Dendritic cell treated with granulocyte-macrophage colony-stimulating factor and Interleukin-4, amounts not matched to agents 40 ng/mL and 50 ng/mL, for 4 days (primary cell): ENCODE measurements at regions of chr4 and their contacts with region 1.

Region 1: GRCh38 chr4:40722576-40723161 is 27.1 kb upstream of the NSUN7 start:
- H3K4me3 Mint-ChIP-seq: no peak overlapping the region
- H3K27ac Mint-ChIP-seq: no peak overlapping the region
- H3K4me1 Mint-ChIP-seq: peaks cover 12% of the 10 kb centered on the region
- H3K27me3 Mint-ChIP-seq: no peaks in the 10 kb centered on the region

Region 2: DNA sequence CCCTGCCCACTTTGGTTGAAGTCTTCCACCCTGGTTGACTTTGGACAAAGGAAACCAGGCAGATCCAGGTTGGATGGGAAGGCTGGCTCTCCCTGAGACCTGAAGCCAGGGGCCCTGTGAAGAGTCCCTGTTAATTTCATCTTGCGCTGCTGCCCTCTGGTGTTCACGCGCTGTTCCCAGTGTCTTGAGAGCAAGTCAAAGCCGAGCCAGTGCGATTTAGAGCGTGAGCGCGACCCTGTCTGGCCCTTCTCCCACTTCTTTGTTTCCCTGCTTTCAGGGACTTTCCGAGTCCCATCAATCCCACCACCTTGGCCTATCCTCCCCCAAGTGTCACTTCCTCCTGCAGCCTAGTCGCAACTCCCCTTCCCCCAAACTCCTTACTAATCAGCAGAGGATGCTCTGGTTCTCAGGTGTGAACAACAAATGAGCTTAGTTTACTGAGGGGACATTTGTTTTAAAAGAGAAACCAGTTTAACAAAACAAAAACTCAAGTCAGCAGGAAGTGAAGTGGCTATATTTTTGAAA is 413.4 kb before region 1 on chr4:
- intact Hi-C with region 1: loop called (anchors 5 kb)
- H3K4me3 Mint-ChIP-seq: peak overlapping the region; percentile 42
- H3K27ac Mint-ChIP-seq: no peak overlapping the region
- H3K4me1 Mint-ChIP-seq: peaks cover 47% of the 10 kb centered on the region
- H3K27me3 Mint-ChIP-seq: peaks cover 16% of the 10 kb centered on the region

Region 3: GRCh38 chr4:40550948-40551462 is 171.7 kb before region 1 on chr4:
- intact Hi-C with region 1: loop called (anchors 5 kb)
- H3K4me3 Mint-ChIP-seq: peak overlapping the region; percentile 79
- H3K27ac Mint-ChIP-seq: peak overlapping the region; percentile 92
- H3K4me1 Mint-ChIP-seq: peaks cover 91% of the 10 kb centered on the region
- H3K27me3 Mint-ChIP-seq: no peaks in the 10 kb centered on the region

Region 4: GRCh38 chr4:40576631-40577480 is 145.8 kb before region 1 on chr4:
- intact Hi-C with region 1: loop called (anchors 2 kb)
- H3K4me3 Mint-ChIP-seq: peak overlapping the region; percentile 48
- H3K27ac Mint-ChIP-seq: peak overlapping the region; percentile 98
- H3K4me1 Mint-ChIP-seq: peaks cover 80% of the 10 kb centered on the region
- H3K27me3 Mint-ChIP-seq: no peaks in the 10 kb centered on the region

Region 5: GRCh38 chr4:40621592-40622512 is 100.8 kb before region 1 on chr4:
- intact Hi-C with region 1: loop called (anchors 2 kb)
- H3K4me3 Mint-ChIP-seq: peak overlapping the region; percentile 57
- H3K27ac Mint-ChIP-seq: peak overlapping the region; percentile 85
- H3K4me1 Mint-ChIP-seq: peaks cover 82% of the 10 kb centered on the region
- H3K27me3 Mint-ChIP-seq: no peaks in the 10 kb centered on the region

Region 6: GRCh38 chr4:40648742-40649281 is 73.9 kb before region 1 on chr4:
- intact Hi-C with region 1: loop called (anchors 2 kb)
- H3K4me3 Mint-ChIP-seq: peak overlapping the region; percentile 37
- H3K27ac Mint-ChIP-seq: peak overlapping the region; percentile 93
- H3K4me1 Mint-ChIP-seq: peaks cover 42% of the 10 kb centered on the region
- H3K27me3 Mint-ChIP-seq: no peaks in the 10 kb centered on the region

Region 7: GRCh38 chr4:40672536-40673526 is 49.8 kb before region 1 on chr4:
- intact Hi-C with region 1: loop called (anchors 2 kb)
- H3K4me3 Mint-ChIP-seq: peak overlapping the region; percentile 53
- H3K27ac Mint-ChIP-seq: peak overlapping the region; percentile 91
- H3K4me1 Mint-ChIP-seq: peaks cover 33% of the 10 kb centered on the region
- H3K27me3 Mint-ChIP-seq: no peaks in the 10 kb centered on the region

Region 8: GRCh38 chr4:40755616-40756015 is 32.9 kb after region 1 on chr4:
- intact Hi-C with region 1: no loop called
- H3K4me3 Mint-ChIP-seq: no peak overlapping the region
- H3K27ac Mint-ChIP-seq: no peak overlapping the region
- H3K4me1 Mint-ChIP-seq: peaks cover 6% of the 10 kb centered on the region
- H3K27me3 Mint-ChIP-seq: peaks cover 14% of the 10 kb centered on the region